GM12878 (cell line): ENCODE measurements at regions of chr10 and their contacts with region 1.

Region 1: GRCh38 chr10:35218339-35218955 is 91.8 kb downstream of the CREM start:
- DNase-seq: peak; percentile 59
- ATAC-seq: peak; percentile 85
- H3K4me3 ChIP-seq: no peak overlapping the region
- H3K27ac ChIP-seq: no peak overlapping the region
- H3K4me1 ChIP-seq: peaks cover 12% of the 10 kb centered on the region
- H3K27me3 ChIP-seq: no peaks in the 10 kb centered on the region
- CTCF ChIP-seq: peak; percentile 64 to 86 (median 79); a peak in 5 of 6 replicates
- EP300 ChIP-seq: no peak
- POLR2A ChIP-seq: no peak
- RAD21 ChIP-seq: peak; percentile 90

Region 2: DNA sequence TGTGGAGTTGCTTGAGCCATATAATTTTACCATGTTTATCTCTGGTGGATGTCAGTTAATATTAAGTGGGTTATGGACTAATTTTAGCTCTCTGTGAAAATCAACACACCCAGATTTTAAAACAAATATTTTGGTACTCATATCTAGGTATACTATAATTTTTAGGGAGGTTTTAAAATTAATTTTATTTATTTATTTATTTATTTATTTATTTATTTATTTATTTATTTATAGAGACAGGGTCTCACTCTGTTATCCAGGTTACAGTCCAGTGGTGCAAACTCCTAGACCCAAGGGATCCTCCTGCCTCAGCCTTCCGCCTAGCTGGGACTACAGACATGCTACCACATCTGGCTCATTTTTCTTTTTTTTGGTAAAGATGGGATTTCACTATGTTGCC is 99.1 kb before region 1 on chr10:
- CTCF ChIA-PET with region 1: interaction called, 378 read pairs
- POLR2A ChIA-PET with region 1: interaction called, 4 read pairs
- RAD21 ChIA-PET with region 1: interaction called, 137 read pairs
- SMC1A ChIA-PET with region 1: interaction called, 281 read pairs
- in situ Hi-C with region 1: loop called (anchors 5 kb)
- intact Hi-C with region 1: loop called (anchors 1 kb)
- DNase-seq: no peak
- ATAC-seq: no peak
- H3K4me3 ChIP-seq: no peak overlapping the region
- H3K27ac ChIP-seq: no peak overlapping the region
- H3K4me1 ChIP-seq: no peaks in the 10 kb centered on the region
- H3K27me3 ChIP-seq: no peaks in the 10 kb centered on the region
- CTCF ChIP-seq: no peak
- EP300 ChIP-seq: no peak
- POLR2A ChIP-seq: no peak
- RAD21 ChIP-seq: no peak

Region 3: GRCh38 chr10:35136263-35136815 is 82.1 kb before region 1 on chr10:
- CTCF ChIA-PET with region 1: interaction called, 4 read pairs
- POLR2A ChIA-PET with region 1: interaction called, 3 read pairs
- RAD21 ChIA-PET with region 1: interaction called, 16 read pairs
- SMC1A ChIA-PET with region 1: interaction called, 11 read pairs
- in situ Hi-C with region 1: no loop called
- intact Hi-C with region 1: no loop called
- DNase-seq: peak; percentile 66
- ATAC-seq: peak; percentile 83
- H3K4me3 ChIP-seq: peak overlapping the region; percentile 18; the same call in 1 of the 2 replicates
- H3K27ac ChIP-seq: peak overlapping the region; percentile 83
- H3K4me1 ChIP-seq: peaks cover 28% of the 10 kb centered on the region
- H3K27me3 ChIP-seq: no peaks in the 10 kb centered on the region
- CTCF ChIP-seq: no peak
- EP300 ChIP-seq: peak; percentile 39 to 83; a peak in 2 of 4 replicates
- POLR2A ChIP-seq: no peak
- RAD21 ChIP-seq: no peak

Region 4: DNA sequence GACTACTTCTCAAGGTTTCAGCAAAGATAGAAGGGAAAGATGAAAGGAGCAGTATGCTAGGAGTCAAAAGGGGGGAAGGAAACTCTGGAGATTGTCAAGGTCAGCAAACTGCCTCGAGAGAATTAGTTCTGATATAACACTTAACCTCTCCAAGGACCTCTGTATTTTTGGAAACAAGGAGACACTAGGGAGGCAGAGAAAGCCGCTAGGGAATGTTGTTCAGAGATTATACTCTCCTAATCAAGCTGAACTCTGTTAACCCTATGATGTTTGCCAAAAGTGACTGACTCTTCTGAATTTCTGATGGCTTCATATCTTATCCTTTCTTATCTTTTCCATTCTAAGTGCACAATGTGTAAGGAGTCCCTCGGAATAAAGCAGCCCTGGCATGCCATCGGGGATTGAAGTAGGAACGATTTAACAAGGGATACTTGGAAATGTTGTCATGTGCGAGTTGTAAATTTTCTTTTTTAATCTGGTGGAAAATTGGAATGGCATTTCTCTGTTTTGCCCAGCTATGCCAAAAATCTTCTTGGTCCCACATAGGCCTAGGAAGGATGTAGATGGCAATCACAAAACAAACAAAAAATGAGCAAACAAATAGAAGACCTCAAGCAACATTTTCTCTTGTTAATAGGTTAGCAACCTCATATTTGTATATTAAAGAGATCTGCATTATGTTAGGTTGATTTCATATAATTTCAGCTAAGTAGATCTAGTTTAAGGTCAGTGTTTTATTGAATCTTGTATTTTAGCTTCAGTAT is 64.5 kb before region 1 on chr10:
- CTCF ChIA-PET with region 1: interaction called, 8 read pairs
- POLR2A ChIA-PET with region 1: no interaction called
- RAD21 ChIA-PET with region 1: interaction called, 9 read pairs
- SMC1A ChIA-PET with region 1: interaction called, 12 read pairs
- in situ Hi-C with region 1: no loop called
- intact Hi-C with region 1: no loop called
- DNase-seq: no peak
- ATAC-seq: no peak
- H3K4me3 ChIP-seq: no peak overlapping the region
- H3K27ac ChIP-seq: no peak overlapping the region
- H3K4me1 ChIP-seq: peaks cover 22% of the 10 kb centered on the region
- H3K27me3 ChIP-seq: no peaks in the 10 kb centered on the region
- CTCF ChIP-seq: no peak
- EP300 ChIP-seq: no peak
- POLR2A ChIP-seq: no peak
- RAD21 ChIP-seq: no peak

Region 5: GRCh38 chr10:35184527-35185171 is 33.8 kb before region 1 on chr10:
- CTCF ChIA-PET with region 1: interaction called, 8 read pairs
- POLR2A ChIA-PET with region 1: interaction called, 4 read pairs
- RAD21 ChIA-PET with region 1: interaction called, 3 read pairs
- SMC1A ChIA-PET with region 1: interaction called, 17 read pairs
- in situ Hi-C with region 1: no loop called
- intact Hi-C with region 1: no loop called
- DNase-seq: no peak
- ATAC-seq: peak; percentile 74
- H3K4me3 ChIP-seq: no peak overlapping the region; the same call in 1 of the 2 replicates
- H3K27ac ChIP-seq: peak overlapping the region; percentile 74
- H3K4me1 ChIP-seq: peaks cover 22% of the 10 kb centered on the region
- H3K27me3 ChIP-seq: no peaks in the 10 kb centered on the region
- CTCF ChIP-seq: no peak
- EP300 ChIP-seq: peak in 1 of 2 experiments; percentile 51; a peak in 1 of 4 replicates
- POLR2A ChIP-seq: no peak
- RAD21 ChIP-seq: no peak